ENCODE measurements at regions of chr9 and their contacts with region 1.

Region 1: GRCh38 chr9:26892251-26893029 is at the start of gene CAAP1:
- DNase-seq: peak; percentile 88 to 94 (median 89)
- H3K4me3 ChIP-seq: peak within 1 kb of the TSS; percentile 78 to 93
- H3K4me3 Mint-ChIP-seq: peak within 1 kb of the TSS; percentile 97 to 100 (median 100)
- H3K27ac ChIP-seq: peak within 1 kb of the TSS; percentile 91
- H3K27ac Mint-ChIP-seq: peak within 1 kb of the TSS; percentile 91 to 100 (median 100)
- H3K4me1 ChIP-seq: peaks cover 34% of the 10 kb centered on the region
- H3K4me1 Mint-ChIP-seq: peaks cover 24 to 57% (median 41%) of the 10 kb centered on the region in 4 donors
- H3K27me3 ChIP-seq: no peaks in the 10 kb centered on the region
- H3K27me3 Mint-ChIP-seq: no peaks in the 10 kb centered on the region
- total RNA-seq, gene CAAP1: 20.0 to 21.5 TPM

Region 2: DNA sequence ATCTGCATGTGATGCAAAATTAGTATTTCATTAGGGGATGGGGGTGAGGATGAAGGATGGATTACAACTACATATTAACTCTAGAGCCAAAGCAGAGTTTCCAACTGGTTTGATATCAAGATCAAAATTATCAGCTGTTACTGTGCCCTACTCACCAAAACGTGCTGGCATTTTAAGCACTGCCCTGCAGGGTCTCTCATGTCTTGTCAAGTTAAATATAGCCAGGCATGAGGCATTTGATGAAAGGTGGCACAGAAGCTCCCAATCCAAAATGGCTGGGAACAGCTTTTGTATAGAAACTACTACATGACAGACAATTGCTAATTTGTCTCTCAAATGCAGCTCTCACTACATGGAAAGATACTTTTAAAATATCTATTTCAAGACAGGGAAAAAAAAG is 27.3 kb after region 1 on chr9:
- CTCF ChIA-PET with region 1: no interaction called
- POLR2A ChIA-PET with region 1: no interaction called
- intact Hi-C with region 1: no loop called
- DNase-seq: no peak
- H3K4me3 ChIP-seq: no peak overlapping the region
- H3K4me3 Mint-ChIP-seq: no peak overlapping the region
- H3K27ac ChIP-seq: no peak overlapping the region
- H3K27ac Mint-ChIP-seq: no peak overlapping the region
- H3K4me1 ChIP-seq: no peaks in the 10 kb centered on the region
- H3K4me1 Mint-ChIP-seq: no peaks in the 10 kb centered on the region
- H3K27me3 ChIP-seq: no peaks in the 10 kb centered on the region
- H3K27me3 Mint-ChIP-seq: no peaks in the 10 kb centered on the region

Region 3: GRCh38 chr9:26946753-26947727 is 54.6 kb after region 1 on chr9 and contains the start of gene PLAA:
- CTCF ChIA-PET with region 1: interaction called, 14 read pairs
- POLR2A ChIA-PET with region 1: interaction called, 31 read pairs
- intact Hi-C with region 1: loop called (anchors 1 kb)
- DNase-seq: peak; percentile 88 to 92 (median 91)
- H3K4me3 ChIP-seq: peak within 1 kb of the TSS; percentile 94 to 96
- H3K4me3 Mint-ChIP-seq: peak within 1 kb of the TSS; percentile 92 to 99 (median 97)
- H3K27ac ChIP-seq: peak within 1 kb of the TSS; percentile 96
- H3K27ac Mint-ChIP-seq: peak within 1 kb of the TSS; percentile 98 to 100 (median 99)
- H3K4me1 ChIP-seq: peaks cover 47% of the 10 kb centered on the region
- H3K4me1 Mint-ChIP-seq: peaks cover 40 to 63% (median 50%) of the 10 kb centered on the region in 4 donors
- H3K27me3 ChIP-seq: no peaks in the 10 kb centered on the region
- H3K27me3 Mint-ChIP-seq: peaks cover 0 to 3% of the 10 kb centered on the region in 2 donors
- total RNA-seq, gene PLAA: 24.0 to 28.3 TPM

Region 4: DNA sequence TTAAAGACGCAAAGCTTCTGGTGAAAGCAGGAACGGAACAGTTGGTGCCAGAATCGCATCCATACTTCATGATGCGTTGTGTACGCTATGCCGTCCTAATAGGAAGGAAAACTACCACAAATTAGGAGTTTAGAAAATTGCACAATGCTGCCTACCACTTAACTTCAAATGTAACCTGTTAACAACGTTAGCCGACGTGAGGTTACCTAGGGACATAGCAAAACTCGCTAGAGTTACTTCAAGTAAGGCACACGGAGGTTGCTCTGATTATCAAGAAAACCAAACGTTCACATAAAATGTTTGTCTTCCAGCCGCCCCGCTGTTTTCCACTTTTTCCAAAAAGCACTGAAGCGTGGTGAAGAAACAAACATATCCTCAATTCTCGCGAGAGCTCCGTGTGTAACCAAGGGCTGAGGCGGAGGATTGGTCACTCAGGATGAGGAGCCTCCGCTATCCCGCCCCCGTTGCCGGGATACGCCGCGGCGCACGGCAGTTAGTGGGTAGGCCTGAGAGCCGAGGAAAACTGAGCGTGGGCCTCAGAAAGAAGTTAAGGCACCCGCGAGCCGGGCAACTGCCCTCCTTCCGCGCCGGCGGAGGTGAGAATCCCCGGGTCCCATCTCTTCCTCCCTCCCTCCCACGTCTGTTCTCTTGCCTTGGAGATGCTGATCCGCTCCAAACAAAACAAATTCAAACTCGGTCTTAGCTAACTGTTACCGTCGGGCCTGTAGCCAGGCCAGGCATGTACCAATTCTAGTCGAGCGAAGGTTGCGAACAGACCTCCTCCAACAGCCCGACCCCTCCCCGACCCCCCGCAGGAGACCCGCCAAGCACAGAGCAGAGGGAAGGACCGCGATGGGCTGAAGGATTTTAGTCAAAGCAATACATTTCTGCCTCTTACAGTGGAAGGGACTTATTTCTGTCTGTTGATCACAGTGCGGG is 63.8 kb after region 1 on chr9 and contains the start of gene IFT74:
- CTCF ChIA-PET with region 1: interaction called, 5 read pairs
- POLR2A ChIA-PET with region 1: interaction called, 41 read pairs
- intact Hi-C with region 1: loop called (anchors 1 kb)
- DNase-seq: peak; percentile 91 to 98 (median 95)
- H3K4me3 ChIP-seq: peak within 1 kb of the TSS; percentile 60 to 73
- H3K4me3 Mint-ChIP-seq: peak within 1 kb of the TSS; percentile 88 to 96 (median 92)
- H3K27ac ChIP-seq: peak within 1 kb of the TSS; percentile 83
- H3K27ac Mint-ChIP-seq: peak within 1 kb of the TSS; percentile 92 to 98 (median 97)
- H3K4me1 ChIP-seq: peaks cover 20% of the 10 kb centered on the region
- H3K4me1 Mint-ChIP-seq: peaks cover 24 to 35% (median 30%) of the 10 kb centered on the region in 4 donors
- H3K27me3 ChIP-seq: no peaks in the 10 kb centered on the region
- H3K27me3 Mint-ChIP-seq: no peaks in the 10 kb centered on the region
- total RNA-seq, gene IFT74: 8.7 to 9.0 TPM

Region 5: GRCh38 chr9:27573634-27574590 is 681.5 kb after region 1 on chr9:
- CTCF ChIA-PET with region 1: no interaction called
- POLR2A ChIA-PET with region 1: no interaction called
- intact Hi-C with region 1: loop called (anchors 1 kb)
- DNase-seq: peak; percentile 96 to 99 (median 98)
- H3K4me3 ChIP-seq: peak overlapping the region; percentile 49 to 78
- H3K4me3 Mint-ChIP-seq: peak overlapping the region; percentile 94 to 99 (median 98)
- H3K27ac ChIP-seq: peak overlapping the region; percentile 94
- H3K27ac Mint-ChIP-seq: peak overlapping the region; percentile 98 to 100 (median 99)
- H3K4me1 ChIP-seq: peaks cover 14% of the 10 kb centered on the region
- H3K4me1 Mint-ChIP-seq: peaks cover 15 to 37% (median 22%) of the 10 kb centered on the region in 4 donors
- H3K27me3 ChIP-seq: no peaks in the 10 kb centered on the region
- H3K27me3 Mint-ChIP-seq: peaks cover 0 to 5% of the 10 kb centered on the region in 2 donors

Measured in CD4-positive, alpha-beta memory T cell (primary cell).